Sciatic nerve (tissue), 2 donors: ENCODE measurements at regions of chr3 and their contacts with region 1.

Region 1: DNA sequence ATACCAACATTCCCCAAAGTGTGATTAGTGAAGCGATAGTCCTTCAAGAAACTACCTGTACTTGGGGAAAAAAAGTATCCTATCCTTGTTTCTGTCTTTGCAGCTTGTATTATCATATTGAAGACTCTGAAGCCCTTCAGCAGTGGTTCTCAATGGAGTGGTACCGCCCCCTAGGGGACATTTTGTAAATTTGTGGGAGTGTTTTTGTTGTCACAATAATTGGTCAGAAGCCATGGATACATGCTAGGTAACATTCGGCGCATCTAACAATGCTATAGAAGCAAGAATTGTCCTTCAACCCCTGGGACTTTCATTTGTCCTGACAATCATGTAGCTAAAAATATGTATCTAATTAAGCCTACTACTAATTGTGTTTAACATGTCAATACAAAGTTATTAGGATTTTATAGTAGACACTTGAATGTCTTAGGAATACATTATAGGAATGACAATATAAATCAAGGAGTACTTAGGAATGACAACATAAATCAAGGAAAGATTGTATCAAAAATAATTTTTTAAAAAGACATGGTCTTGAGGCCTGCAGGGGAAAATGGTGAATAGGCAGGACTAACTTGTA is 53.7 kb downstream of the NMD3 start:
- DNase-seq: no peak
- ATAC-seq: no peak

Region 2: GRCh38 chr3:161336661-161337060 is 61.9 kb after region 1 on chr3:
- intact Hi-C with region 1: no loop called
- DNase-seq: no peak
- ATAC-seq: no peak

Region 3: GRCh38 chr3:161413127-161413849 is 138.5 kb after region 1 on chr3:
- intact Hi-C with region 1: loop called (anchors 10 kb)
- DNase-seq: peak; percentile 73
- ATAC-seq: peak; percentile 29

Region 4: GRCh38 chr3:161576714-161577510 is 302.1 kb after region 1 on chr3:
- intact Hi-C with region 1: no loop called
- DNase-seq: no peak
- ATAC-seq: no peak